Activated CD4-positive, alpha-beta T cell treated with anti-CD3 and anti-CD28 coated beads for 36 hours (primary cell): ENCODE measurements at regions of chr12 and their contacts with region 1.

Region 1: DNA sequence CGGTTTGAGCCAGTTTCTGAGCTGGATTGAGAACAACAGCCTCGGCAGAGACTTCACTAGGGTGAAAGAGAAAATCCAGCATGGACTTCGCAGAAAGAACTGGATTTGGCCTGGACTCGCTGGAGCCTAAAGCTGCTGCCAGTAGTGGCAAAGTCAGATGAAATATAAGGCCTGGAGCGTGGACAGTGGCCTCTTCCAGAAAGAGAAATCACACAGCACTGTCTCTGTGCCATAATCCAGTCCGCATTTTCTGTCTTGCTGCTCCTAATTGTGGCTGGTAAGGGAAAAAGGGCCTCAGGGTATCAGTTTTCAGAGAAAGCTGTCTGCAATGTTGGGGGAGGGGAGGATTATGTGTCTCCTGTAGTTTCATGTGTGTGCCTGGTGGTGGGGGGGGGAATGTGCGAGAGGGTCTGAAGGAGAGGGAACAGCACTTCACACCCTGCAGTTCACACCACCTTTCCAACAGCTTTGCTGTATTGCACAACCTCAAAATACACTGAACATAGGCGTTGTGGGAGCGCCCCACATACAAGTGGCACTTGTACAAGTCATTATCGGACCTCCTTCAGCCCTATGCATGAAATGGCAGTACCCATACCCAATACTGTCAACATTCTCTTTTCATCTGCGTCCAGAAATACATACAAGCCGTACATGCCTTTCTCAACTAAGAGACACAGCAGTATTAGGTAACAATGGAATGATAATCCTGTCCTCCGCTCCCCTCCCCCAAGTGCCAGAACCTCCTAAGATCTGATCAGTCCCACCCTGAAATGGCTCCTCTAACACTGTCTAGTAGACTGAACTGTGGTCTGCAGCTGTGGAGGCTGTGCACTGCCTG is 107.5 kb upstream of the ATF7IP start:
- DNase-seq: peak; percentile 95
- ATAC-seq: peak; percentile 78
- H3K4me3 Mint-ChIP-seq: peak overlapping the region; percentile 66
- H3K27ac Mint-ChIP-seq: peak overlapping the region; percentile 99
- H3K4me1 Mint-ChIP-seq: peaks cover 48% of the 10 kb centered on the region
- H3K27me3 Mint-ChIP-seq: no peaks in the 10 kb centered on the region

Region 2: DNA sequence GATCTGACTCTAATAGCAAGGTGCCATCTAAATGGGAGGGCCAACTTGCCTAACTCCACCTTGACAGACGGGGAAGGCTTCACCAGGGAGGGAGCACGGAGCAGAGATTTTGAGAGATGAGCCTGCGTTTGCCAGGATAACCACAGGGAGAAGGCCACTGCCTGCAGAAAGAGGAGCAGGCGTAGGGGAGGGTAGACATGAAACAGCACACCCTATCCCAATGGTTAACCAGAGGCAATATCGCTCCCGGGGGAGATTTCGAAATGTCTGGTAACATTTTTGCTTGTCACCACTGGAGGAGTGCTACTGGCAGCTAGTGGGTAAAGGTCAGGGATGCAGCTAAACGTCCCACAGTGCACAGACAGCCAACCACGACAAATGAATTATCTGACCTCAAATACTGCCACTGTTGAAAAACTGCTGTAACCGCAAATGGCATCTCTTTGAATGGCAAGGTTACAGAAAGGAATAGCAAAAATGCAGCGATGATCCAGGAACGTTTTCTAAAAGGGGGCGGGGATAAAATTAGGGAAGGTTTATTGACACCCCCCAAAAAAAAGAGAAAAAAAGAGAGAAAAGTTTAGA is 18.5 kb before region 1 on chr12:
- CTCF ChIA-PET with region 1: interaction called, 9 read pairs
- POLR2A ChIA-PET with region 1: no interaction called
- intact Hi-C with region 1: loop called (anchors 1 kb)
- DNase-seq: peak; percentile 63
- ATAC-seq: peak; percentile 86
- H3K4me3 Mint-ChIP-seq: peak overlapping the region; percentile 62
- H3K27ac Mint-ChIP-seq: peak overlapping the region; percentile 89
- H3K4me1 Mint-ChIP-seq: peaks cover 20% of the 10 kb centered on the region
- H3K27me3 Mint-ChIP-seq: no peaks in the 10 kb centered on the region

Region 3: DNA sequence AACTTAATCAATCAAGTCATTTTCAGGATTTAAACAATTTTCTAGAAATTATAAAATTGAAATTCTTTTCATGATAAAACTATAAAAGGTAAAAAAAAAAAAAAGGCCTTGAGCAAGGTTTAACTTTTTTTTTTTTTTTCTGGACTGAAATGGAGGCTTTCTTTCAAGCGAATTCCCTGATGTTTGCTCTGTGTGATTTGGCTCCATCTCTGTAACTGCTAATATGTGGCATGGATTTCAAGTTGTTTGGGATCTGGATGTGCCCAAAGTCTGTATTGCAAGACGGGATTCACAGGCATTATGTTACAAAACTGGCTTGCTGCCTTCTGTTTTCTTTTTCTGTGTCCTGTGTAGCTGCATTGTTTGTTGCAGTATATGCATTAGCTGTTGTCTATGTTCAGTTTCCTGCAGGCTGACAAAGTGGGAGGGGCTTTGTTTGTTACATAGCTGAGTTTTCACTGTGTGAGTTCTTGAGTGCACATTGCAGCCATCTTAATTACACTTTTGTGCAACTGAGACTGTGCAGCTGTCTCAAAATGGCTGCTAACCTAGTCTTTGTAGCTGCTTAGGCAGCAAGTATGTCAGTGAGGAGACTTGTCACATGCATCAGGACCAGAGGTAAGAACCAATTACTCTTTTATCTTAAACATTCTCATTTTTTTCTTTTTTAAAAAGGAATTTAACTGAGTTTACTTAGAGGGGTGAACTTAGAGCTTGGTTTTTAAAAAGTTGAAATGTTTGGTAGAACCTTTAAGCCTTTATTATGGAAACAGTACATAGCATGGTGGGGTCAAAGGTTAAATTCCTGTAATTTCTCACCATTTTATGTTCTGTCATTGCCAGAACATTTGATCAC is 127.1 kb after region 1 on chr12:
- CTCF ChIA-PET with region 1: interaction called, 17 read pairs
- POLR2A ChIA-PET with region 1: interaction called, 19 read pairs
- intact Hi-C with region 1: loop called (anchors 1 kb)
- DNase-seq: peak; percentile 75
- ATAC-seq: peak; percentile 96
- H3K4me3 Mint-ChIP-seq: peak overlapping the region; percentile 73
- H3K27ac Mint-ChIP-seq: peak overlapping the region; percentile 94
- H3K4me1 Mint-ChIP-seq: peaks cover 59% of the 10 kb centered on the region
- H3K27me3 Mint-ChIP-seq: no peaks in the 10 kb centered on the region

Region 4: GRCh38 chr12:14417715-14418114 is 159.8 kb after region 1 on chr12:
- CTCF ChIA-PET with region 1: interaction called, 5 read pairs
- POLR2A ChIA-PET with region 1: no interaction called
- intact Hi-C with region 1: loop called (anchors 1 kb)
- DNase-seq: peak; percentile 86
- ATAC-seq: peak; percentile 76
- H3K4me3 Mint-ChIP-seq: peak overlapping the region; percentile 56
- H3K27ac Mint-ChIP-seq: peak overlapping the region; percentile 92
- H3K4me1 Mint-ChIP-seq: peaks cover 59% of the 10 kb centered on the region
- H3K27me3 Mint-ChIP-seq: no peaks in the 10 kb centered on the region

Region 5: GRCh38 chr12:14479004-14479403 is 221.1 kb after region 1 on chr12:
- CTCF ChIA-PET with region 1: no interaction called
- POLR2A ChIA-PET with region 1: no interaction called
- intact Hi-C with region 1: loop called in 1 of 2 experiments (anchors 2 kb)
- DNase-seq: no peak
- ATAC-seq: peak; percentile 91
- H3K4me3 Mint-ChIP-seq: no peak overlapping the region
- H3K27ac Mint-ChIP-seq: peak overlapping the region; percentile 51
- H3K4me1 Mint-ChIP-seq: peaks cover 19% of the 10 kb centered on the region
- H3K27me3 Mint-ChIP-seq: no peaks in the 10 kb centered on the region

Region 6: GRCh38 chr12:14741942-14742341 is 484.0 kb after region 1 on chr12:
- CTCF ChIA-PET with region 1: no interaction called
- POLR2A ChIA-PET with region 1: no interaction called
- intact Hi-C with region 1: no loop called
- DNase-seq: no peak
- ATAC-seq: no peak
- H3K4me3 Mint-ChIP-seq: no peak overlapping the region
- H3K27ac Mint-ChIP-seq: no peak overlapping the region
- H3K4me1 Mint-ChIP-seq: peaks cover 3% of the 10 kb centered on the region
- H3K27me3 Mint-ChIP-seq: no peaks in the 10 kb centered on the region

Region 7: DNA sequence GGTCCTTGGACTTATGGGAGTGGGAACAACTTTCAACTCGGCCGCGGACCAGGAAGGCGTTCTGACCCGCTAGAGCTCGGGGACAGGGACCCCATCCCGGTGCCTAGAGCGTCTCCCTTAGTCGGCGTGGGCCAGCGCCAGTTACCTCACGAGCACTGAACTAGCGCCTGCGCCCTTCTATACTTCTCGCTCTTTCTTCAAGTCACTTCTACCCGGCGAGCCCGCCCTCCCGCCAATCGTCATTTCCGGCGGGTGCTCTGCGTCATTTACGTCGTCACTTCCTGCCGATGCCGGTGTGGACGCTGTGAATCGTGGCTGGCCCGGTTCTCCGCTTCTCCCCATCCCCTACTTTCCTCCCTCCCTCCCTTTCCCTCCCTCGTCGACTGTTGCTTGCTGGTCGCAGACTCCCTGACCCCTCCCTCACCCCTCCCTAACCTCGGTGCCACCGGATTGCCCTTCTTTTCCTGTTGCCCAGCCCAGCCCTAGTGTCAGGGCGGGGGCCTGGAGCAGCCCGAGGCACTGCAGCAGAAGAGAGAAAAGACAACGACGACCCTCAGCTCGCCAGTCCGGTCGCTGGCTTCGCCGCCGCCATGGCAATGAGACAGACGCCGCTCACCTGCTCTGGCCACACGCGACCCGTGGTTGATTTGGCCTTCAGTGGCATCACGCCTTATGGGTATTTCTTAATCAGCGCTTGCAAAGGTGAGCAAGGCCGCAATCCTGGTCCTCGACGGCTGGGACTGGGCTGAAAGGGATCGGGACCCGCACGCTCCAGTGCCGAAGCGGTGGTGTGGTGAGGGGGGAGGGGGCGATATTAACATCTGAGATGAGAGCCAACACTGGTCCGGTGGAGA is 1624.4 kb after region 1 on chr12 and contains the start of gene STRAP:
- CTCF ChIA-PET with region 1: no interaction called
- POLR2A ChIA-PET with region 1: no interaction called
- intact Hi-C with region 1: loop called in 1 of 2 experiments (anchors 5 kb)
- DNase-seq: peak; percentile 97
- ATAC-seq: peak; percentile 98
- H3K4me3 Mint-ChIP-seq: peak within 1 kb of the TSS; percentile 95
- H3K27ac Mint-ChIP-seq: peak within 1 kb of the TSS; percentile 98
- H3K4me1 Mint-ChIP-seq: peaks cover 42% of the 10 kb centered on the region
- H3K27me3 Mint-ChIP-seq: no peaks in the 10 kb centered on the region
- total RNA-seq, gene STRAP: 133 to 139 TPM